HCT116 (cell line): ENCODE measurements at regions of chr4 and their contacts with region 1.

Region 1: GRCh38 chr4:145618932-145619638 is at the start of gene MMAA:
- DNase-seq: peak; percentile 82
- ATAC-seq: peak; percentile 97
- H3K4me3 ChIP-seq: peak within 1 kb of the TSS; percentile 82 to 85
- H3K27ac ChIP-seq: peak within 1 kb of the TSS; percentile 75
- H3K4me1 ChIP-seq: peaks cover 4 to 24% of the 10 kb centered on the region in 2 experiments
- H3K27me3 ChIP-seq: no peaks in the 10 kb centered on the region
- CTCF ChIP-seq: peak; percentile 55 to 75 (median 70); a peak in 5 of 6 replicates
- POLR2A ChIP-seq: peak; percentile 53
- RAD21 ChIP-seq: no peak
- total RNA-seq, gene MMAA: 3.6 TPM

Region 2: DNA sequence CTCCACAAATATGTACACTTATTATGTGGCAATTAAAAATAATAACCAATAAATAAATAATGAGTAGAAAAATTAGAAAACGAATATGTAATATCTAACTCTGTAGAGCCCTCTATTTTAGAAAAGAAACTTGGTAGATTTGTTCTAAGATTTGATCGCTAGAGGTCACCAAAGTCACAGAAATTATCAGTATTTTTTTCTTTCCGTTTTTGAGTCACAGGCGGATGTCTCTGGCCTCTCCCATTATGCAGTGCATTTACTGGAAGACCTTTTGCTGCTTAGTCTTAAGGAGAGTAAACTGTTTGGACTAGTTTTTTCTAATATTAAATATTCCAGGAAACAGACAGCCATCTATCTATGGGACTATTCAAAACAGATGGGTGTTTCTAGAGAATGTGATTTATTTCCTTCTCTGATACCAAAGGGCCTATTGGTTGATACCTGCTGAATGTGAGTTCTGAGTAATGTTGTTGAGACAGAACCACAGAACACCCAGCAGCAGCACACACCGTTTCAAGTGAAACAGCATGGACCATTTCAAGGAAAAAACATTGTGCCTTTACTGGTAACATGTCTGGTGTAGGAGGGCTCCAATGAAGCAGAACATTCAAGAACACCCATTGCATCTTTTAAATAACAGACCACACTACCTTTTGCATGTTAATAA is 1444.6 kb before region 1 on chr4:
- CTCF ChIA-PET with region 1: no interaction called
- POLR2A ChIA-PET with region 1: no interaction called
- RAD21 ChIA-PET with region 1: no interaction called
- intact Hi-C with region 1: loop called (anchors 5 kb)
- DNase-seq: peak; percentile 44
- ATAC-seq: peak; percentile 87
- H3K4me3 ChIP-seq: no peak overlapping the region
- H3K27ac ChIP-seq: no peak overlapping the region
- H3K4me1 ChIP-seq: no peaks in the 10 kb centered on the region
- H3K27me3 ChIP-seq: no peaks in the 10 kb centered on the region
- CTCF ChIP-seq: peak; percentile 9 to 60 (median 54); a peak in 4 of 6 replicates
- POLR2A ChIP-seq: no peak
- RAD21 ChIP-seq: peak; percentile 81

Region 3: DNA sequence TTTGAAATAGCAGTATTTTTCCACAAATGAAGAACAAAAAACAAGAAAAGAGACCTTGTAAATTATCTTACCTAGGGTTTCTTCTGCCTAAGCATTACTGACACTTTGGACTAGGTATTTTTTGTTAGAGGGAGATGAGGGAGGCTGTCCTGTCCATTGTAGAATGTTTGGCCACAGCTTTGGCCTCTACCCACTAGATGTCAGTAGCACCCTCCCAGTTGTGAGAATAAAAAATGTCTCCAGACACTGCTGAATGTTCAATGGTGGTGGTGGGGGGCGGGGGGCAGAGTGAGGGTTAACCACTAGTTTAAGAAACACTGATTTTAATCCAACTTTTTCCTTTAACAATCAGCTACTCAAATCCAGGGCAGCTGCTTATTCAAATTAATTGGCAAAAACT is 464.5 kb before region 1 on chr4:
- CTCF ChIA-PET with region 1: interaction called, 4 read pairs
- POLR2A ChIA-PET with region 1: no interaction called
- RAD21 ChIA-PET with region 1: no interaction called
- intact Hi-C with region 1: loop called (anchors 2 kb)
- DNase-seq: no peak
- ATAC-seq: peak; percentile 92
- H3K4me3 ChIP-seq: no peak overlapping the region
- H3K27ac ChIP-seq: no peak overlapping the region
- H3K4me1 ChIP-seq: no peaks in the 10 kb centered on the region
- H3K27me3 ChIP-seq: no peaks in the 10 kb centered on the region
- CTCF ChIP-seq: peak; percentile 37 to 67 (median 61); a peak in 5 of 6 replicates
- POLR2A ChIP-seq: no peak
- RAD21 ChIP-seq: peak; percentile 59

Region 4: DNA sequence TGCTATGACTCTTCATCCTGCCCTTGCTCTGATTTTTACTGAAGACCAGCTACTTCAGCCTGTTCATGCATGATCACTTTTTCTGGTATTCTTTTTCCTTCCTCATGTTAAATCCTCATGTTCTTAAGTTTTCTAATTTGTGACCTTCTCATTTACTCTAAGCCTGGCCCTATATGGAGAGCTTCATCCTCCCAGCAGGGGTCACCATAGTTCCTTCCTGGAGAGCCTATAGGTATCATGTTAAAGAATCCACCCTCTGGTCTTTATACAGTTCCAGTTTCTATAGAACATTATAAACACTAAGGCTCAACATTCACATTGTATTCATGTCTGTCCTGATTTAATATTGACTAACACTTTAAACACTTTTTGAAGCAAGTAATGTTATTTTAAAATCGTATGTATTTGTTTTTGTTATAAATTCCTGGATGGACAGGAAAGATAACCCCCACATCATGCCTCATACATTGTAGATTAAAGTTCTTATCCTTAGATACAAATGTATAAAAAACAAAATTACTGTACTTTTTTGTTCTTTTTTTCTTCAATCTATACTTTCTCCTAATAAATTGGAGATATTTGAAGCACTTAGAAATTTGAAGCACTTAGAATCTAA is 384.9 kb before region 1 on chr4:
- CTCF ChIA-PET with region 1: interaction called, 28 read pairs
- POLR2A ChIA-PET with region 1: interaction called, 4 read pairs
- RAD21 ChIA-PET with region 1: interaction called, 6 to 7 read pairs
- intact Hi-C with region 1: no loop called
- DNase-seq: peak; percentile 35
- ATAC-seq: peak; percentile 100
- H3K4me3 ChIP-seq: no peak overlapping the region
- H3K27ac ChIP-seq: no peak overlapping the region
- H3K4me1 ChIP-seq: no peaks in the 10 kb centered on the region
- H3K27me3 ChIP-seq: no peaks in the 10 kb centered on the region
- CTCF ChIP-seq: peak; percentile 83 to 92 (median 88)
- POLR2A ChIP-seq: no peak
- RAD21 ChIP-seq: peak; percentile 94

Region 5: DNA sequence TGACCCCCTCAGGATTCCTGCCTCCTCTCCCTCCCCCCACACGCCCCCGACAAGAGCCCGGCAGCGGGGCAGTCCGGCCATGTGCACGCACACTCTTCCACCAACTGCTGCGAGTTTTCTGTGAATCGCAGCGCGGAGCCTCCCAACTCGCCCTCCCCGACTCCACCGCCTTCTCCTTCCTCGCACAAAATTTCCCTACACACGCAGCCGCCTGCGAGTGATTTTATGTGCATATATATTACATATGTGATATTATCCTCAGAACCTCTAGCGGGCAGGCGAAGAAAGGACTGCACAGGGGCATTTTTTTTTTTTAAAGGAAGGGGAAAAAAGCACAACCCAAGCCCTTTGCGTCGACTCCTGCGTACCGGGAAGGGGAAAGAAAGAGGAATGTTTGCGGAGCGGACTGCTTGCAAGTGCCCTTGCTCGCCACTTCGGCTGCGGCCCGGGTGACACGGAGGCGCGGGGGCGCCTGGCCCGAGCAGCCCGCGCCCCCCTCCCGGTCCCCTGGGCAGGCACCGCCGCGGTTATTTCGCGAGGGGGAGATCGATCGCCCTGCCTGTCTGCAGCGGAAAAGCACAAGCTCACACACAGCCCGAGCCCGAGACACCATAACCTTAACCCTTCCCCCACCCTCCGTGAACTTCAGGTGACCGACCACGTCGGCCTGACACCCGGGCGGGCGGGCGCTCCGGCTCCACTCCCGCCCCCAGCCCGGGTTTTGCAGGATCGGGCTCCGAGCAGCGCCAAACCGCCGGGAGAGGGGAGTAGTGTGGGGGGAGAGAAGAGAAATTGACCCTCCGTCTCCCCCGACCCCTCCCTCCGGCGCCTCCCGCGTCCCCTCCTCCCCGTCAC is 317.3 kb after region 1 on chr4:
- CTCF ChIA-PET with region 1: no interaction called
- POLR2A ChIA-PET with region 1: no interaction called
- RAD21 ChIA-PET with region 1: no interaction called
- intact Hi-C with region 1: loop called (anchors 5 kb)
- DNase-seq: no peak
- ATAC-seq: peak; percentile 56
- H3K4me3 ChIP-seq: peak overlapping the region; percentile 75 to 87
- H3K27ac ChIP-seq: peak overlapping the region; percentile 92
- H3K4me1 ChIP-seq: peaks cover 21 to 46% of the 10 kb centered on the region in 2 experiments
- H3K27me3 ChIP-seq: no peaks in the 10 kb centered on the region
- CTCF ChIP-seq: peak in 1 of 3 experiments; percentile 27; a peak in 1 of 6 replicates
- POLR2A ChIP-seq: no peak
- RAD21 ChIP-seq: no peak